OCI-LY7 (cell line): ENCODE measurements at regions of chr7 and their contacts with region 1.

Region 1: DNA sequence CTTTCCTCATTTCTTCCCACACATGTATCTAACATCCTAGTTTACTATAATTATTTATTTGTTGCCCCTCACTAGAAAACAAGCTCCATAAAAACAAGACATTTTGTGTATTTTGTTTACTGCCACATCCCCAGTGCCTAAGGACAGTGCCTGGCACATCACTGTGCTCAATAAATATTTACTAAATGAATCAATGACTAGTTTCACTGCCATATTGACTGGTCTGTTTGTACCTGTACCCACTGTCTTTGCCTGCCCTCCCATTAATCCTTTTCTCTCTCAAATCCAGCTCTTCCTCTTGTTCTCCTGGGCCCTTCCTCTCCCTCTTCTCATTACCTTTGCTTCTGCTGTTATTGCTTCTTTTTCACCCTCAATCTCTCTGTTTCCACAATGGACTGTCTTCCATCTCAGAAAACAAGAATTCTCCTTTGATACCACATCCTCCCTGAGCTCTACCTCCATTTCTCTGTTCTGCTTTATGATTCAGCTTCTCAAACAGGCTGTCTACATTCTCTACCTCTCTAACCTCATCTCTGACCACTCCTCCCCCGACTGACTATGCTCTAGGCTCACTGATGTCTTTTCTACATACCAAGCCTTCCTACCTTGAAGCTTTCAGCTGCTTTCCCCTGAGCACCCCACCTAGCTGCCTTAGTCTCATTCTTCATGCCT is 8.3 kb upstream of the FAM133B start:
- DNase-seq: no peak
- H3K4me3 ChIP-seq: no peak overlapping the region
- H3K27ac ChIP-seq: no peak overlapping the region
- H3K4me1 ChIP-seq: no peaks in the 10 kb centered on the region
- CTCF ChIP-seq: no peak

Region 2: DNA sequence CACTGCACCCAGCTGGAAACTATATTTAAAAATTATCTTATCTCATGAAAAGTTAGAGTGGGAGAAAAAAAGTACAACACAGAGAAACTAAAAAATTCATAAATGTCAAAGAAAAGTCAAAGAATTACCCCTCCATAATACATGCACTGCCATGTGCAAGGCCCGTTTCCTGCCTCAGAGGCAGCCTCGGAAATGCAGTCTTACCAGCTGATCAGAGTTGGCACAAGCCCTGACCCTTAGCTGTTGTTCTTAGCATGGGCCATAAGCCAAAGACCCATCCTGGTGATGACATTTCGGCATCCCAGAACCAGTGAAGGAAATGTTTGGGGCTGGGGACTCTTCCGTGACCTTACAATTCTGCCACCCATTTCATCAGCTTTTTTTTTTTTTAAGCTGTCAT is 48.3 kb before region 1 on chr7:
- CTCF ChIA-PET with region 1: no interaction called
- POLR2A ChIA-PET with region 1: no interaction called
- intact Hi-C with region 1: no loop called
- DNase-seq: no peak
- H3K4me3 ChIP-seq: no peak overlapping the region
- H3K27ac ChIP-seq: no peak overlapping the region
- H3K4me1 ChIP-seq: no peaks in the 10 kb centered on the region
- CTCF ChIP-seq: no peak

Region 3: DNA sequence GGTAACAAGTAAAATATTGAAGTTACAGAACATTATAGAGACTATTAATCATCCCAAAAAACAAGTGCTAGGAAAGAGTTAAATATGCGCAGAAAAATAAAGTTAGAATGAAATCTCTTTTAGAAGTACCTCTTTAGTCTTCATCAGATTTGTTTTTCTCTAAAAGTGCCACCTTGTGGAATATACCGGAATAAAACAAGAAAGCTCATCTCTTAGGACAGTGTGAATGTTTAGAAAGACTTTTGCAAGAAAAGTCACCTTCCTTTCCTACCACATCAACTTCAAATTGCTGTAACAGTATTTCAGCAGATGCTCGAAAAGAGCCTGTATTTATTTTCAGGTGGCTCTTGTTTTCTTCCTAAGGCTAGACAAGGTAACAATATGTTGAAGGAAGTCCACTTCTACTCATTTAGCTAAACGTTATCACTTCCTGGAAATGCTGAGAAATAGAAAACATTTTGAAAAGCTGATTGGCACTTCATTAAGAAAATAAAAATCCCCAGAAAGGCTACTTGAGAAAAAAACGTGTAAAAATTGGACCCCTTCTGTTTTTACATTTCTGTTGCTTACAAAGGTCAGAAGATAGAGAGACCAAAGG is 11.6 kb after region 1 on chr7:
- CTCF ChIA-PET with region 1: no interaction called
- POLR2A ChIA-PET with region 1: interaction called, 16 read pairs
- intact Hi-C with region 1: no loop called
- DNase-seq: peak; percentile 52
- H3K4me3 ChIP-seq: no peak overlapping the region
- H3K27ac ChIP-seq: no peak overlapping the region
- H3K4me1 ChIP-seq: peaks cover 26% of the 10 kb centered on the region
- CTCF ChIP-seq: peak; percentile 81

Region 4: DNA sequence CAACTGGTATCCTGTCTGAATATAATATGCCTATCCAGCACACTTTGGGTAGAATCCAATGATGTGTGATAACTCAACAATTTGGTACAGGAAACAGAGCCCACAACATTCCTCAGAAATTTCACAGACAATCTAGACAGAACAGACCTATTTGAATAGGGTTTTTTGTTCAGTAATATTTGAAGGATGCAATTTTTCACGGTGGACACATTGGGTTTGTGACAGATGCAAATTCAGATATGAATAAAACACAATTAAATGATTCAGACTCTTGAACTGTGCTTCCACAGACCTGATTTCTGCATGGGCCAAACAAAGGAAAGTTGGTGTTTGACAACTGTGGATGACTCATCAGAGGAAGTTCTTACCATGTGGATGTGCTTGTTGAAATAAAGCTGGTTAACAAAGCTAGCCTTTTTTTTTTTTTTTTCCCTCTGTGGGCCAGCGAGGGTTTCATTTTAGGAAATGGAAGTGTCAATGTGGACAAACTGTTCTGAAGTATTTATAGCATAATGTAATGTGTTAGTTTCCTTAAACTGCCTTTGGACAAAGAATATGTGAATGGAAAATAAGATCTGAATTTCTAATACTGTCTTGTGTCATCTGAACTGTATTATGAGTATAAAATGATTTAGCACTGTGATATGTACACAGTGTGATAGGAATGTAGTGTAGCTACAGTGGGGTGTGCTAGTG is 34.9 kb after region 1 on chr7:
- CTCF ChIA-PET with region 1: no interaction called
- POLR2A ChIA-PET with region 1: no interaction called
- intact Hi-C with region 1: no loop called
- DNase-seq: no peak
- H3K4me3 ChIP-seq: no peak overlapping the region
- H3K27ac ChIP-seq: no peak overlapping the region
- H3K4me1 ChIP-seq: no peaks in the 10 kb centered on the region
- CTCF ChIP-seq: no peak

Region 5: DNA sequence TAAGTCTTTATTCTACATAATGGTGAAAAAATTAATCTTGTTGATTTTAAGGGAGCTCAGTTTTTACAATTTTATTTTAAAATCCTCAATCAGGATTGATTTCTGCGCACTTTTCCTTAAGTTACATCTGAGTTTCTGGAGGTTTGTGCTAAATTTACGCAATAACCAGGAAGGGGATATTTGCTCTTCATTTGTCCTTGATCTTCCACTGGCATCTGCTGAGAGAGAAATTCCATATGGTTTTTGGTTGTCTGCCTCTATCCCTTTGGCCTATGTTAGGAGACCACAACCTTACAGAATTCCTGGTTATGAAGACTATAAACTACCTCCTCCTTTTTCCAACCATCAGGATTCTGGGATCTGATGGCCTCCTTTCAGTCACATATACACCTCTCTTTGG is 258.0 kb after region 1 on chr7:
- CTCF ChIA-PET with region 1: no interaction called
- POLR2A ChIA-PET with region 1: no interaction called
- intact Hi-C with region 1: no loop called
- DNase-seq: no peak
- H3K4me3 ChIP-seq: no peak overlapping the region
- H3K27ac ChIP-seq: no peak overlapping the region
- H3K4me1 ChIP-seq: no peaks in the 10 kb centered on the region
- CTCF ChIP-seq: no peak